ENCODE measurements at regions of chr5 and their contacts with region 1.

Region 1: GRCh38 chr5:178279725-178280438 is 47.3 kb upstream of the PHYKPL start:
- DNase-seq: no peak
- H3K4me3 ChIP-seq: no peak overlapping the region
- H3K27ac ChIP-seq: no peak overlapping the region
- H3K4me1 ChIP-seq: peaks cover 13% of the 10 kb centered on the region
- H3K27me3 ChIP-seq: no peaks in the 10 kb centered on the region
- CTCF ChIP-seq: peak; percentile 80 to 88 (median 85)
- POLR2A ChIP-seq: no peak

Region 2: DNA sequence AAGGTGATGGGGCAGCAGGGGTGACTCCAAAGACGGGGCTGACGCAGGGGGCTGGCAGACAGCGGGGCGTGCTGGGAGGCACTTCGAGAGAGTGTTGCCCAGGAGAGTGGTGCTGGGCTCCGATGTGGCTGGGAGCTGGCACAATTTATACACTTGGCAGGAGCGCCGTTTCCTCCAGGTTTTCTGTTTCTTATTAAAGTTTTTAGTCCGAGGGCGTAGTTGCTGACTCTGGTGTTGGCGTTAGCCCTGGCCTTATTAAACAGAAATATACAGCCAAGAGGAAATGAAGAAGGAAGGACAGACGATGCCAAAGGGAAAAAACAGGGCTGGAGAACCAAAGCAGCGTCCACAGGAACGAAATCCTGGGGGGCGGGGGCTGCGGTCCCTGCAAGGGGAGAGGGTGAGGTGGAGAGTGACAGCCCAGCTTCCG is 92.3 kb after region 1 on chr5:
- intact Hi-C with region 1: no loop called
- DNase-seq: no peak
- H3K4me3 ChIP-seq: peak overlapping the region in 1 of 2 donors; percentile 13
- H3K27ac ChIP-seq: peak overlapping the region; percentile 76
- H3K4me1 ChIP-seq: peaks cover 15% of the 10 kb centered on the region
- H3K27me3 ChIP-seq: no peaks in the 10 kb centered on the region
- CTCF ChIP-seq: no peak
- POLR2A ChIP-seq: no peak

Region 3: DNA sequence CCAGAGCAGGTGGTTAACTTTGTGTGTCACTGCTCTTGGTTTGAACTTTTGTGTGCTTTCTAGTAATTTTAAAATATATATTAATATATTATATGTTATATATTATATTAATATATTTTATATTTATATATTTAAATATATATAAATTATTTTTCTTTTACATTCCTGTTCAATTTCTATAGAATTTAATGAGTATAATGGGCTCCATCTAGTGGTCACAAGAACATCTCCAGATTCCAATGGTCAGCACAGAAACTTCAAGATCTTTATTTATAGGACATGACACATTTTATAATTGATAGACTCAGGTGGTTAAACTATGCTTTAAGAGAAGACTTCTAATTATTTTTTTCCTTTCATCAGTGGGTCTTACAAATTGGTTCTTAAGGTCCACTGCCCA is 271.2 kb after region 1 on chr5:
- intact Hi-C with region 1: loop called (anchors 5 kb)
- DNase-seq: no peak
- H3K4me3 ChIP-seq: no peak overlapping the region
- H3K27ac ChIP-seq: no peak overlapping the region
- H3K4me1 ChIP-seq: no peaks in the 10 kb centered on the region
- H3K27me3 ChIP-seq: no peaks in the 10 kb centered on the region
- CTCF ChIP-seq: peak in 2 of 3 experiments; percentile 15 to 21
- POLR2A ChIP-seq: no peak